BJ (cell line): ENCODE measurements at regions of chr6 and their contacts with region 1.

Region 1: DNA sequence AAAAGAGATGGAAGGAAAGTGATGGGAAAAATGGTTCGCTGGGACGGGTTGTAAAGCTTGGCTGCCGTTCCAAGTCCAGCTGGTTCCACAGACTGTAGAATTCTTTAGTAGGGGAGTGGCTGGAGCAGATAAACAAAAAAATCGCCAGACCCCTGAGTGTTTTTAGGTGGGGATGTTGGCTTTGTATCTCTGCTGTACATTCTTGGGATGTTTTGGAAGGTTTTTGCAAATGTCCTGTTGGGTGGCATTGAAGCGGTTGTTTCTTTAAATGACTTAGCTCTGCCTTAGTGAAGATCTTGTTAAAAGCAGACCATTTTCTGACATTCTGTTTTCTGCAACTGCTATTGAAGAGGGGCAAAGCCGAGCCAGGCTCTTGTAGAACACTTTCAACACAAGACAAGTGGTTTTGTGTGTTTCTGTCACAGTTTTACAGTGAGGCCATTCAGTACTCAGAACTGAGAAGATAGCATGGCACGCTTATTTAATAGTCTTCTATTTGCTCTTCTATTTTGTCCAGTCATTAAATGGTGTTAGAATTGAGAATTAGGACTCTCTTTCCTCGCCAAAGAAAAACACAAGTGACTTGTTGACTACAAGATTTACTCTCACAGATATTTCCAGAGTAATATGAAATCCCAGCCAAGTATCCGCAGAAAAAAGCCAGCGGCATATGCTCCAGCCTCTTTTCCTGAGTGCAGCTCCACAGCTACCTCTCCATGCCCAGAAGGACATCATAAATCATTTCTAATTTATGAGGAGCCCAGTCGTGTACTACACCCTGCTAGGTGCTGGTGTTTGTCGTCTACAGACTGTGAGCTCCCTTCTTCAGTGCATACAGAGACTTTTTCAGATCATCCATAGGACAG is 65.8 kb downstream of the PHACTR2 start:
- DNase-seq: no peak
- H3K4me3 ChIP-seq: no peak overlapping the region; the same call in 1 of the 2 replicates
- H3K27me3 ChIP-seq: no peaks in the 10 kb centered on the region
- CTCF ChIP-seq: no peak

Region 2: DNA sequence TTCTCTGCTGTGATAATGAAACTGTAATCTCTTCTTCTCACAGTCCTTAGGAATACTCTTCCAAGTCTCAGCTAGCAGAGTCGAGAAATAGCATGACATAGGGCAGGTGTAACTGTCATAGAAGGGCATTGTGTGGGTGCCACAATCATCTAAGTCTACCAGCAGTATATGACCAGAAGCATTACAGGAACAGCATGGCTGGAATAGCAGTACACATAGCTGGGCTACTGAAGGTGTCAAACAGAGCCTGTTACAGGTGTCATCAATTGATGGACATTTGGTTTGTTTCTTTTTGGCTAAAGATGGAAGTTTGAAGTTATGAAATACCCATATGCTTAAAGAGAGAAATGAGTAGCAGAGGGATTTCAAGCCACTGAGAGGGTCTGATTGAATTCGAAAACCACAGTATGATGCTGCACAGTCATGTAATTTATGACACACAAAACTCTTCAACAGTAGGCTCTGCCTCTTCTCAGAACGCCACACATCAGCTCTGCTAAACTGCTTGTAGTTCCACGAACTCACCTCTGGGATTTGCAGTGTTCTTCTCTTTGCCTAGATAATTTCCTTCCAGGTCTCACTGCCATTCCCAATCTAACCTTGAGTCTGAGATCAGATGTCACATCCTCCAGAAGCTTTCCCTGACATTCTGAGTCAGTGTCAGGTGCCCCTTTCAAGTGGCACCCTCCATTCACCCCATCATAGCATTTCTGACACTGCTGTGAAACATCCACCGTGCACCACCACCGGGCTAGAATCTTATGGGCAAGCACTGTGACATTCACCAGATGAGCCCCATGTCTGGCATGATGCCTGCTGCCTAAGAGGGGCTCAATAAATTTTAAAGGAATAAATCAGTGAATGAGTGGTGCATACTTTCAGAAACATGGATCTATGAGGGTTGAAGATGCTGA is 444.0 kb before region 1 on chr6:
- CTCF ChIA-PET with region 1: no interaction called
- POLR2A ChIA-PET with region 1: no interaction called
- DNase-seq: no peak
- H3K4me3 ChIP-seq: no peak overlapping the region
- H3K27me3 ChIP-seq: no peaks in the 10 kb centered on the region
- CTCF ChIP-seq: no peak

Region 3: DNA sequence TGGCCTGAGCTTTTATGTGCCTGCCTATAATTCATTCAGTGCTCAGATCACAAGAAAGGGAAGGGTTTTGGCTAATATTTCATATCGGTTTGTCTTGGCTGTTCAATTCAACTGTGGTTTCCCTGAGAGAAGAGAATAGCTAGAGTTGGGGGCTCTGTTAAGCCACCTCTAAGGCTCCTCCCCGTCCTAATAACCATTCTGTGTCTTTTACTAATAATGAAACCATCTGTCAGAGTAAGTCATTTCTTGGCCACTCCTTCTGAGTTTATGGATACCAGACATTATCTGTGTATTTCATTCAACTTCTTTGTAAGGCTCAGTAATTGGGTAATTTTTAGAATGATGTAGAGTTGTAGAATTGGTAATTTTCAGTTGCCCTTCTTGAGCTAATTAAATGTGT is 412.0 kb after region 1 on chr6:
- CTCF ChIA-PET with region 1: no interaction called
- POLR2A ChIA-PET with region 1: interaction called, 22 read pairs
- DNase-seq: no peak
- H3K4me3 ChIP-seq: no peak overlapping the region
- H3K27me3 ChIP-seq: no peaks in the 10 kb centered on the region
- CTCF ChIP-seq: no peak